MCF 10A (cell line): ENCODE measurements at regions of chr19 and their contacts with region 1.

Region 1: GRCh38 chr19:18762125-18763023 is 28.7 kb downstream of the COMP start:
- DNase-seq: peak; percentile 98
- H3K4me3 Mint-ChIP-seq: peak overlapping the region; percentile 63
- H3K27ac Mint-ChIP-seq: peak overlapping the region; percentile 55
- H3K4me1 Mint-ChIP-seq: peaks cover 35% of the 10 kb centered on the region
- H3K27me3 Mint-ChIP-seq: no peaks in the 10 kb centered on the region
- CTCF ChIP-seq: no peak

Region 2: GRCh38 chr19:18685597-18686190 is 76.7 kb before region 1 on chr19:
- CTCF ChIA-PET with region 1: no interaction called
- POLR2A ChIA-PET with region 1: interaction called, 5 read pairs
- intact Hi-C with region 1: loop called (anchors 5 kb)
- DNase-seq: no peak
- H3K4me3 Mint-ChIP-seq: no peak overlapping the region
- H3K27ac Mint-ChIP-seq: no peak overlapping the region
- H3K4me1 Mint-ChIP-seq: peaks cover 20% of the 10 kb centered on the region
- H3K27me3 Mint-ChIP-seq: no peaks in the 10 kb centered on the region
- CTCF ChIP-seq: no peak

Region 3: GRCh38 chr19:18742838-18743783 is 19.3 kb before region 1 on chr19:
- CTCF ChIA-PET with region 1: no interaction called
- POLR2A ChIA-PET with region 1: no interaction called
- intact Hi-C with region 1: no loop called
- DNase-seq: no peak
- H3K4me3 Mint-ChIP-seq: no peak overlapping the region
- H3K27ac Mint-ChIP-seq: no peak overlapping the region
- H3K4me1 Mint-ChIP-seq: no peaks in the 10 kb centered on the region
- H3K27me3 Mint-ChIP-seq: no peaks in the 10 kb centered on the region
- CTCF ChIP-seq: no peak

Region 4: DNA sequence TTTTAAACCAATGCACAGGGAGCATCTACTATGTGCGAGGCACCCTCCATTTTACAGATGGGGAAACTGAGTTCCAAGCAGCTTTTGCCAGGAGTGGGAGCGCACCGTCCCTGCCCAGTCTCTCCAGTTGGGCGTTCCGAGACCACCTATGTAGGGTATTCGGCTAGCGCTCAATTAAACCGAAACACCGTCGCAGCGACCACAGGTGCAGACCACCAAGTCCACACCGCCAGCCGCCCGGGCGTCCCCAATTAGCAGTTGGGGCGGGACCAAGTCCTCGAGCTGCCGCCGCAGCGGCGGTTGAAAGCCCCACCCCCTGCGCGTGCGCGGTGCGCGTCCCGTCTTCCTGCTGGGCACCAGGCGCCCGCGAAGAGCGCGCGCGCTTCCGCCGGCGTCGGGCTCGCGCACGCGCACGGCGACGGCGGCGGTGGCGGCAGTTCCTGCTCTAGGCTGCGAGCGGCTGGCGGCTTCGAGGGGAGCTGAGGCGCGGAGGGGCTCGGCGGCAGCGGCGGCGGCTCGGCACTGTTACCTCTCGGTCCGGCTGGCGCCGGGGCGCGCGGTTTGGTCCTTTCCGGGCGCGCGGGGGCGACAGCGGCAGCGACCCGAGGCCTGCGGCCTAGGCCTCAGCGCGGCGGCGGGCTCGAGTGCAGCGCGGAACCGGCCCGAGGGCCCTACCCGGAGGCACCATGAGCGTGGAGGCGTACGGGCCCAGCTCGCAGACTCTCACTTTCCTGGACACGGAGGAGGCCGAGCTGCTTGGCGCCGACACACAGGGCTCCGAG is 69.3 kb after region 1 on chr19 and contains the start of gene UPF1:
- CTCF ChIA-PET with region 1: no interaction called
- POLR2A ChIA-PET with region 1: interaction called, 18 read pairs
- intact Hi-C with region 1: no loop called
- DNase-seq: peak; percentile 90
- H3K4me3 Mint-ChIP-seq: peak within 1 kb of the TSS; percentile 94
- H3K27ac Mint-ChIP-seq: peak within 1 kb of the TSS; percentile 98
- H3K4me1 Mint-ChIP-seq: peaks cover 25% of the 10 kb centered on the region
- H3K27me3 Mint-ChIP-seq: no peaks in the 10 kb centered on the region
- CTCF ChIP-seq: no peak
- total RNA-seq, gene UPF1: 79.8 and 85.0 TPM in 2 replicates